ENCODE measurements at regions of chr4 and their contacts with region 1.

Region 1: GRCh38 chr4:81844717-81845116 is 373.0 kb upstream of the RASGEF1B start:
- DNase-seq: peak; percentile 80
- H3K4me3 ChIP-seq: no peak overlapping the region
- H3K27ac ChIP-seq: no peak overlapping the region
- H3K4me1 ChIP-seq: no peaks in the 10 kb centered on the region
- H3K27me3 ChIP-seq: no peaks in the 10 kb centered on the region
- CTCF ChIP-seq: peak; percentile 47 to 83 (median 78)
- POLR2A ChIP-seq: no peak

Region 2: GRCh38 chr4:80713409-80713808 is 1131.3 kb before region 1 on chr4:
- intact Hi-C with region 1: no loop called
- DNase-seq: no peak
- H3K4me3 ChIP-seq: no peak overlapping the region
- H3K27ac ChIP-seq: no peak overlapping the region
- H3K4me1 ChIP-seq: no peaks in the 10 kb centered on the region
- H3K27me3 ChIP-seq: no peaks in the 10 kb centered on the region
- CTCF ChIP-seq: no peak
- POLR2A ChIP-seq: no peak

Region 3: GRCh38 chr4:81405894-81406401 is 438.8 kb before region 1 on chr4:
- intact Hi-C with region 1: loop called (anchors 5 kb)
- DNase-seq: peak; percentile 59
- H3K4me3 ChIP-seq: no peak overlapping the region
- H3K27ac ChIP-seq: no peak overlapping the region
- H3K4me1 ChIP-seq: no peaks in the 10 kb centered on the region
- H3K27me3 ChIP-seq: no peaks in the 10 kb centered on the region
- CTCF ChIP-seq: peak; percentile 63 to 86 (median 78)
- POLR2A ChIP-seq: no peak

Region 4: DNA sequence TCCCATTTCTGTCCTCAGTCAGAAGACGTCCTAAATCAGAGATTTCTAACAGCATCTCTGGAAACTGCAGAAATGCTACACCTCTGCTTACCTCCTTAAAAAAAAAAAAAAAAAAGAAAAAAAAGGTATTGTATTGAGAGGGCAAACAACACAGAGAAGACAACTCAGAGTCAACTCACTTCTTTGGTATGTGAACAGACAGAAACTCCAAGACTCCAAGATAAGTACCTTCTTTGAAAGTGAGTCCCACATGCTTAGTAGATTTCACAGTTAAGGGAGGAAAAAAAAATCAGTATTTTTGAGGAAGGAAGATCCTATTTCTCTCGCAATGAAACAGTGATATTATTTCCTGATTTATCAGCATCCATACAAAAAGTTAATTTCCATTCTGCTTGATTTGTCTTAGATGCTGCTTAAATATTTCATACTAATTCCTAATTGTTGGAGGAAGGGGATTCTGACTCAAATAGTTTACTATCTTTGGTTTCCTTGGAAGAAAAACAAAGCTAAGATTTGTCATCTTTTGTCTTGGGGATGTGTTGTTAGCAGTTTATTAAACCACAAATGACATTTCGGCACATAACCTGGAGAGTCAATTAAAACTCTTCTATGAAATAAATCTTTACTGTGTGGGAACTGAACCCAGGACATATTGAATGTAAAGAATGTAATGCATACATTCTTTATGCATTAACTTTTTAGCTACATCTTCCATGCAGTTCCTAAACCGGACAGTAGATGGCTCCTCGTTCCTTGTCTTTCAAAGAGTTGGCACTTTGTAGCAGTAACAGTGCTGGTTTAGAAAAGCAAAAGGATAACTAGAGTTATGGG is 377.7 kb before region 1 on chr4:
- intact Hi-C with region 1: loop called (anchors 2 kb)
- DNase-seq: peak; percentile 85
- H3K4me3 ChIP-seq: no peak overlapping the region
- H3K27ac ChIP-seq: no peak overlapping the region
- H3K4me1 ChIP-seq: peaks cover 5% of the 10 kb centered on the region
- H3K27me3 ChIP-seq: no peaks in the 10 kb centered on the region
- CTCF ChIP-seq: peak; percentile 73 to 94 (median 88)
- POLR2A ChIP-seq: no peak